Naive thymus-derived CD4-positive, alpha-beta T cell (primary cell): ENCODE measurements at regions of chr3 and their contacts with region 1.

Region 1: DNA sequence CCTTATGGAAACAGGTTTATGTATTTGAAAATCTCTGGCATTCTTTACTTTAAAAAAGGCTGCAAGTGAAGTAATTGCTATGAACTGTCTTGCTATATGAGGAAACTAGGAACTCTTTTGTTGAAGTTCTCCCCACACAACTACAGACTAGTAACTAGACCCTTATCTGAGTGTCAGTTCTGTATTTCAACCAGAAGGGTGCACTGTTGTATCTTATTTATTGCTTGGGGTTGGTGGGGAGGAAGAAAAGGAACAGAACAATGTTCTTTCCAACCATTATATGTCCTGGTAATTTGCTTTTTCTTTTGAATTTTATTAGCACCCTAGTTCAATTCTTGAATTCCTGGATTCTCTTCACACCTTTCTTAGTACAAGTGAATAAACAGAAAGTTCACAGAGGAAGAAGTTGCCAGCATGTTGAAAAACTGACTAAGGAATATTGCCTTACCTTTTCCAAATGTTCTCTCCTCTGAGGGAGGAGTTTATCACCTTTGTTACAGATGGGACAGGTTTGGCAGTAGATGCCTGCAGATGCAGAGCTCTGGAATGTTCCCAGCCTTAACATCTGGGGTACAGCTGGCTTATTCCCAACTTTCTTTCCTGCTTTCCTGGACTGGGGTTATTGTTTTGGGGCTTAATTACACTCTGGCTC is 162.4 kb upstream of the CFAP20DC start:
- DNase-seq: peak in 7 of 9 donors; percentile 11 to 60 (median 53)
- ATAC-seq: peak; percentile 83
- H3K4me3 ChIP-seq: no peak overlapping the region
- H3K4me3 Mint-ChIP-seq: no peak overlapping the region
- H3K27ac ChIP-seq: no peak overlapping the region
- H3K27ac Mint-ChIP-seq: no peak overlapping the region
- H3K4me1 ChIP-seq: no peaks in the 10 kb centered on the region
- H3K4me1 Mint-ChIP-seq: peaks cover 0 to 10% (median 5%) of the 10 kb centered on the region in 7 donors
- H3K27me3 ChIP-seq: no peaks in the 10 kb centered on the region
- H3K27me3 Mint-ChIP-seq: peaks cover 0 to 11% (median 8%) of the 10 kb centered on the region in 5 donors

Region 2: DNA sequence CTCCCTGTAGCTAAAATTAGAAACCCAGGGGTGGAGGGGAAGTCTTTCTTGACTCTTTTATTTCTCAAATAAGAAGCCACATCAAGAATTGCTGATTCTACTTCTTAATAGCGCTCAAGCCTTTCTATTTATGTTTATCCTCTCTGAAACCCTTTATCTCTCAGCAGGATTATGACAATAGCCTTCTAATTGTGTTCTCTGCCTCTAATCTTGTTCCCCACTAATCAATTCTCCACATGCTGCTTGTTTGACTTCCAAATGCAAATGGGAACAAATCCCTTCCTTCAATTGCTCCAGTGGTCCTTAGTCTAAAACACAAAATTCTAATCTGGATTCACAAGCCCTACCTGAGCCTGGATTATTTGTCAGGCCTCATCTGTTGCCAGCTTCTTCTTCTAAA is 118.7 kb before region 1 on chr3:
- CTCF ChIA-PET with region 1: no interaction called
- POLR2A ChIA-PET with region 1: no interaction called
- intact Hi-C with region 1: no loop called
- DNase-seq: no peak
- ATAC-seq: no peak
- H3K4me3 ChIP-seq: no peak overlapping the region
- H3K4me3 Mint-ChIP-seq: no peak overlapping the region
- H3K27ac ChIP-seq: no peak overlapping the region
- H3K27ac Mint-ChIP-seq: no peak overlapping the region
- H3K4me1 ChIP-seq: no peaks in the 10 kb centered on the region
- H3K4me1 Mint-ChIP-seq: no peaks in the 10 kb centered on the region
- H3K27me3 ChIP-seq: no peaks in the 10 kb centered on the region
- H3K27me3 Mint-ChIP-seq: peaks cover 0 to 14% (median 4%) of the 10 kb centered on the region in 5 donors

Region 3: DNA sequence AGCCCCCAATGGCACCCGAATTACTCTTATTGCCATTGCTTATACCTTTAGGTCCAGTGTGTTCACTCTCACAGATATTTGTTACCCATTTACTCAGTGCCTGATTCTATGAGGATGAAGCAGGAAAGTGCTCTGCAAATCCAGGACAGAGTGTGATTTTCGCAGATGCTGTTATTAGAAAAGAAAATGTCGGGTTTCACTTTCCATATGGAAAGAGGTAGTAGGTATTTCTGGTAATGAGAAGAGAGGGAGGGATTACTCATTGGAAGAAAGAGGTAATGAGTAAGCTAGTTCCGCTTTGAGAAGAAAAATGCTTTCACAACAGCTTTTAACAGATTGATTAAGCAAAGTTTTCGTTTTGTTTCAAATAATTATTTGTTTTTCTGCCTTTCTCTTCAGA is 173.9 kb after region 1 on chr3:
- CTCF ChIA-PET with region 1: no interaction called
- POLR2A ChIA-PET with region 1: no interaction called
- intact Hi-C with region 1: loop called in 1 of 2 experiments (anchors 10 kb)
- DNase-seq: no peak
- ATAC-seq: peak; percentile 60
- H3K4me3 ChIP-seq: no peak overlapping the region
- H3K4me3 Mint-ChIP-seq: peak overlapping the region in 2 of 10 donors; percentile 4 to 58
- H3K27ac ChIP-seq: no peak overlapping the region
- H3K27ac Mint-ChIP-seq: peak overlapping the region in 1 of 9 donors; percentile 88
- H3K4me1 ChIP-seq: no peaks in the 10 kb centered on the region
- H3K4me1 Mint-ChIP-seq: peaks cover 3 to 80% (median 38%) of the 10 kb centered on the region in 7 donors
- H3K27me3 ChIP-seq: no peaks in the 10 kb centered on the region
- H3K27me3 Mint-ChIP-seq: no peaks in the 10 kb centered on the region

Region 4: DNA sequence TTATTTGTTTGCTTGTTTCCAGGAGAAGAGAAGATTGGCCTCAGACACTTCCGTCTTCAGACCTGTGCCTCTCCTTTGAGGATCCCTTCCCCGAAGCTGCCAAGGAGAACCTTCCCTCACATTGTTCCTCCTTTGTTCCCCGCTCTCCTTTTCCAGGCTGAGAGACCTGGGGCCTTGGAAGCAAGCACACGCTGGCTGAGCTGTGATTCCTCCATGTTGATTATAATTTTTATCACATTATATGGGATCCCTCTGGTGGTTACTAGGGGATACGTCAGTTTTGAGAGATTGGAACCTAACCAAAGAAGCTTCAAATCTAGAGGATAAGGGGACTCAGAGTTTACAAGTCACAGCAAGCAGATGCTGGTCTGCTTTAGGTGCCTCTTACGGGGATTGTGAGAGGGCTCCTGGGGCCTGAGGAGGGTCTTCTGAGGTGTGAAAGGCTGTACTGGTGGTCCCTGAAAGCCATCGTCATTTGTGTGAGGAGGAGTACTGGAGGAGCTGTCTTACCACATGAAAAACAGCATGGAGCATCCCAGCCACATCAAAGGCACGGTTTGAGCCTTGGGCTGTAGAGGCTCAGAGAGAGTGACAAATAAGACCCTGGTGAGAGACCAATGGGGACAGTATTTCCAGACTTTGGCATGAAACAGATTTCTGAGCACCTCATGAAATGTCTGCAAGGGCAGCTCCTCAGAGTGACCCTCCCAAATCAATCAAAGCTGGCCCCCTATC is 597.6 kb after region 1 on chr3:
- CTCF ChIA-PET with region 1: no interaction called
- POLR2A ChIA-PET with region 1: no interaction called
- intact Hi-C with region 1: loop called in 1 of 2 experiments (anchors 1 kb)
- DNase-seq: peak in 2 of 9 donors; percentile 8 to 11
- ATAC-seq: no peak
- H3K4me3 ChIP-seq: no peak overlapping the region
- H3K4me3 Mint-ChIP-seq: peak overlapping the region in 1 of 10 donors; percentile 2
- H3K27ac ChIP-seq: no peak overlapping the region
- H3K27ac Mint-ChIP-seq: peak overlapping the region in 6 of 9 donors; percentile 25 to 84 (median 56)
- H3K4me1 ChIP-seq: no peaks in the 10 kb centered on the region
- H3K4me1 Mint-ChIP-seq: peaks cover 5 to 77% (median 42%) of the 10 kb centered on the region in 7 donors
- H3K27me3 ChIP-seq: no peaks in the 10 kb centered on the region
- H3K27me3 Mint-ChIP-seq: no peaks in the 10 kb centered on the region

Region 5: DNA sequence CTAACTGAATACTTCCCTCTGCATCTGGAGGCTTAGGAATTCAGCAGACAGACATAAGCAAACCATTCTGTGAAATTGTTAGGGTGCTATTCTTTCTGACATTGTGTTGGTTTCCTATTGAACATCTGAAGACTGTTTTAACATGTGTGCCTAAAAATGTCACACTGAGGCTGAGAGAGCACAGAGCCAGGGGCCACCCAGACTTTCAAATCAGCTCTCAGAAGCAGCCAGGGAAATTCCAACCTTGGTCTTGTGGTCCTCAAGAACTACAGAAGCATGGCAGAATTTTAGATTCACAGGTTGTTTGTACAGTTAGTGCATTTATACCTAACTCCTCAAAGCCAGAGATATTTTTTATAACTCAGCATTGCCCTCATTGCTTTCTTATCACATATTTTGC is 766.7 kb after region 1 on chr3:
- CTCF ChIA-PET with region 1: no interaction called
- POLR2A ChIA-PET with region 1: no interaction called
- intact Hi-C with region 1: loop called in 1 of 2 experiments (anchors 10 kb)
- DNase-seq: peak in 4 of 9 donors; percentile 32 to 54 (median 39)
- ATAC-seq: peak; percentile 64
- H3K4me3 ChIP-seq: no peak overlapping the region
- H3K4me3 Mint-ChIP-seq: peak overlapping the region; percentile 7 to 74 (median 56)
- H3K27ac ChIP-seq: peak overlapping the region; percentile 47
- H3K27ac Mint-ChIP-seq: peak overlapping the region; percentile 33 to 96 (median 78)
- H3K4me1 ChIP-seq: peaks cover 0 to 55% of the 10 kb centered on the region in 2 donors
- H3K4me1 Mint-ChIP-seq: peaks cover 20 to 94% (median 89%) of the 10 kb centered on the region in 7 donors
- H3K27me3 ChIP-seq: no peaks in the 10 kb centered on the region
- H3K27me3 Mint-ChIP-seq: no peaks in the 10 kb centered on the region